ENCODE measurements at regions of chr3 and their contacts with region 1.

Region 1: GRCh38 chr3:136390574-136390973 is 140.4 kb downstream of the PCCB start:
- DNase-seq: peak; percentile 78
- H3K4me3 ChIP-seq: no peak overlapping the region
- H3K27ac ChIP-seq: no peak overlapping the region
- H3K4me1 ChIP-seq: peaks cover 11% of the 10 kb centered on the region
- H3K27me3 ChIP-seq: no peaks in the 10 kb centered on the region
- CTCF ChIP-seq: no peak
- POLR2A ChIP-seq: no peak

Region 2: GRCh38 chr3:136196401-136197158 is 194.0 kb before region 1 on chr3:
- CTCF ChIA-PET with region 1: no interaction called
- POLR2A ChIA-PET with region 1: no interaction called
- dilution Hi-C with region 1: no loop called
- intact Hi-C with region 1: loop called (anchors 5 kb)
- DNase-seq: peak; percentile 100
- H3K4me3 ChIP-seq: peak overlapping the region; percentile 36 to 76 (median 48)
- H3K27ac ChIP-seq: peak overlapping the region; percentile 93
- H3K4me1 ChIP-seq: peaks cover 14% of the 10 kb centered on the region
- H3K27me3 ChIP-seq: no peaks in the 10 kb centered on the region
- CTCF ChIP-seq: no peak
- POLR2A ChIP-seq: peak; percentile 79

Region 3: GRCh38 chr3:136366289-136366688 is 24.3 kb before region 1 on chr3:
- CTCF ChIA-PET with region 1: interaction called, 10 read pairs
- POLR2A ChIA-PET with region 1: no interaction called
- dilution Hi-C with region 1: no loop called
- intact Hi-C with region 1: no loop called
- DNase-seq: no peak
- H3K4me3 ChIP-seq: no peak overlapping the region
- H3K27ac ChIP-seq: no peak overlapping the region
- H3K4me1 ChIP-seq: no peaks in the 10 kb centered on the region
- H3K27me3 ChIP-seq: no peaks in the 10 kb centered on the region
- CTCF ChIP-seq: no peak
- POLR2A ChIP-seq: no peak

Region 4: GRCh38 chr3:136512381-136512780 is 121.8 kb after region 1 on chr3:
- CTCF ChIA-PET with region 1: interaction called, 10 read pairs
- POLR2A ChIA-PET with region 1: no interaction called
- dilution Hi-C with region 1: no loop called
- intact Hi-C with region 1: no loop called
- DNase-seq: no peak
- H3K4me3 ChIP-seq: no peak overlapping the region
- H3K27ac ChIP-seq: no peak overlapping the region
- H3K4me1 ChIP-seq: peaks cover 2% of the 10 kb centered on the region
- H3K27me3 ChIP-seq: no peaks in the 10 kb centered on the region
- CTCF ChIP-seq: no peak
- POLR2A ChIP-seq: no peak

Region 5: DNA sequence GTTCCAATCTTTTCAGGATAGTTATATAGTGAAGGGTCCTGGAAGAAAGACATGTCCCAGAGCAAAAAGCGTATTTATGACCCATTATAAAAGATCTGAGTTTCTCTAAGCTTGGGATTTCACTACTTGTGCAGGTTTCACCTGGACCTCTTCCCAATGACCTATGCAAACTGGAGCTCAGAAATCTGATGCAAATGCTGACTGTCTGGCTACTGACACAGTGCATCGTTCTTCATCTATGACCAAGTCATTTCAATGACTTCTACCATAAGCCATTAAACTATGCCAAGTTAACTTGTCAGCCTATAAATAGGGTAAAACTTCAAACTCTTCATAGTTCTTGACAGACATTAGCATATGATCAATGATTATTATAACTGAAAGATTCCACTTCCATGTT is 350.5 kb after region 1 on chr3:
- CTCF ChIA-PET with region 1: interaction called, 10 read pairs
- POLR2A ChIA-PET with region 1: no interaction called
- dilution Hi-C with region 1: no loop called
- intact Hi-C with region 1: no loop called
- DNase-seq: no peak
- H3K4me3 ChIP-seq: no peak overlapping the region
- H3K27ac ChIP-seq: no peak overlapping the region
- H3K4me1 ChIP-seq: peaks cover 2% of the 10 kb centered on the region
- H3K27me3 ChIP-seq: no peaks in the 10 kb centered on the region
- CTCF ChIP-seq: no peak
- POLR2A ChIP-seq: no peak

Region 6: GRCh38 chr3:136909187-136909586 is 518.6 kb after region 1 on chr3:
- CTCF ChIA-PET with region 1: no interaction called
- POLR2A ChIA-PET with region 1: no interaction called
- dilution Hi-C with region 1: no loop called
- intact Hi-C with region 1: no loop called
- DNase-seq: no peak
- H3K4me3 ChIP-seq: no peak overlapping the region
- H3K27ac ChIP-seq: no peak overlapping the region
- H3K4me1 ChIP-seq: peaks cover 6% of the 10 kb centered on the region
- H3K27me3 ChIP-seq: no peaks in the 10 kb centered on the region
- CTCF ChIP-seq: no peak
- POLR2A ChIP-seq: no peak

Measured in endothelial cell of umbilical vein (primary cell).